ENCODE measurements at regions of chr2 and their contacts with region 1.

Region 1: DNA sequence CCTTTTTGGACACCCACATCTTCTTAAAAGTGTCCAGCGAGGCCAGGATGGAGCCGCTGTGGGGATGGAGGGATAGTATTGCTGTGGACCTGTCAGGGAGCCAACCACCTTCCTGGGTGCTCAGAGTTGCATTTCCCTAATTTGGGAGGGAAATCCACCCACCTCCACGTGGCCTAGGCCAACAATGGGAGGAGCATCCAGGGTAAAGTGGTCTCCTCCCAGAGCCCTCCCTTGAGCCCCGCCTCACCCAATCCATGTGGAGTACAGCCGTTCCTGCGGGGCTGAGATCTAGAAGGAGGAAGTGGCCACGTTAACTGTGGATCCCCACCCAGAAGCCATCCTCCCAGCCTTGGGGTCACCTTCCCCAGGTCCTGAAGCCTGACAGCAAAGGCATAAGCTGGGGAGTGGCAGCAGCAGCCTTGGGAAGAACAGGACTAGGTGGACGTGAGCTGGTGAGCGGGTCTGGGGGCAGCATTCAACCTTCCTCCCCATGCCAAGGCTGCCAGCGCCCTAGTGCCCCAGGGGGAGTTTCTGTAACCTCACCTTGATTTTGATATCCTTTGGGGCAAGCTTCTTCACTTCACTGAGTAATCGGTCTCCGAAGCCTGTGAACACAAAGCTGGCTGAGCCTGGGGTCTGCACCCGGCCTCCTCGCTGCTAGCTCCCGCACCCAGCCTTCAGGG is 6.8 kb downstream of the ACTR1B start:
- DNase-seq: no peak
- H3K4me3 ChIP-seq: no peak overlapping the region
- H3K4me3 Mint-ChIP-seq: no peak overlapping the region
- H3K27ac ChIP-seq: no peak overlapping the region
- H3K27ac Mint-ChIP-seq: peak overlapping the region in 1 of 7 donors; percentile 74
- H3K4me1 ChIP-seq: peaks cover 19% of the 10 kb centered on the region
- H3K4me1 Mint-ChIP-seq: peaks cover 8 to 24% (median 13%) of the 10 kb centered on the region in 4 donors
- H3K27me3 ChIP-seq: no peaks in the 10 kb centered on the region
- H3K27me3 Mint-ChIP-seq: no peaks in the 10 kb centered on the region

Region 2: GRCh38 chr2:97645695-97646629 is 11.1 kb before region 1 on chr2 and contains the start of gene COX5B:
- CTCF ChIA-PET with region 1: interaction called, 17 read pairs
- POLR2A ChIA-PET with region 1: interaction called, 323 read pairs
- intact Hi-C with region 1: no loop called
- DNase-seq: peak; percentile 97 to 99 (median 98)
- H3K4me3 ChIP-seq: peak within 1 kb of the TSS; percentile 84 to 87
- H3K4me3 Mint-ChIP-seq: peak within 1 kb of the TSS; percentile 91 to 98 (median 96)
- H3K27ac ChIP-seq: peak within 1 kb of the TSS; percentile 88
- H3K27ac Mint-ChIP-seq: peak within 1 kb of the TSS; percentile 92 to 99 (median 98)
- H3K4me1 ChIP-seq: peaks cover 20% of the 10 kb centered on the region
- H3K4me1 Mint-ChIP-seq: peaks cover 18 to 33% (median 27%) of the 10 kb centered on the region in 4 donors
- H3K27me3 ChIP-seq: no peaks in the 10 kb centered on the region
- H3K27me3 Mint-ChIP-seq: no peaks in the 10 kb centered on the region
- total RNA-seq, gene COX5B: 118 to 120 TPM

Measured in CD4-positive, alpha-beta memory T cell (primary cell).